Activated B cell treated with CpG ODN at 0.5 μM for 24 hours (primary cell): ENCODE measurements at regions of chrX and their contacts with region 1.

Region 1: DNA sequence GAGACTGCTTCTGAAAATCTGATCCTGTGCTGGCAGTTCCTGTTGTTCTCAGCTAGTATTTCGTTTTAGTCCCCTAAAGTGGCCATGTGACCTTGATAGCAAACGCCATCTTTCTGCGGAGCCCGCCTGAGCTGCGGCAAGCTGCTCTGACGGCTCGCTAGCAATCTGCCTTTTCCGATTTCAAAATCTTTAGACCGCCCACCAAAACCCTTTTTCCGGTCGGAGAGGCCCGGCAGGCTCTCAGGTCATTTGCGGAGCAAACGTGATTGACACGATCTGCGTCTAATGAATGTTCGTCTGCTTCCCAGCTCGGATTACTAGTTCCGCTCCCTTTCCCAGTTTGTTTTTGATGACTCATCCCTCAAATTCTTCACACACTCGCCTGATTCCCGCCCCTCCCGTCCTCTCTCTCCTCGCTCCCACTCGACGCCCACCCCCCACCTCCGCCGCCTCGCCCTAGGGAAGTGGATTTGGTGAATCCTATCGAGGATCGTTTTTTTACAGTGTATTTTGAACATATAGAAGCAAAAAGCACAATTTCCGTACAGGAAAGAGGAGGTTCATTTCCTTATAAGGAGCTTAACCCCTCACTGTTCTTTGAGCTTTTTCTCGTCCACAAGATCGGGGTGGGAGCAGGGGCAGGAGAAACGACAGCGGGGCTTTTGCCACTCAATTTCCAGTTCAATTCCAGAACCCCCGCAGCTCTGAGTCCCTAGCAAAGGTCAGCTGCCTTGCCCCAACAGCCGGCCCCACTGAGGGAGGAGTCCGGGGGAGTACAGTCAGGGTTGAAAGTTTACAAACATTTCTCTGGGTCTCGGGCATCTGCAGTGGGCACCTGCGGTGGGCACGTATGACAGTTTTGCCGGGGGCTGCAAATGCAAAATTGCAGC is 37.5 kb downstream of the NLGN3 start:
- DNase-seq: peak; percentile 44
- ATAC-seq: peak; percentile 90
- H3K4me3 Mint-ChIP-seq: peak overlapping the region; percentile 93
- H3K27ac Mint-ChIP-seq: peak overlapping the region; percentile 99
- H3K4me1 Mint-ChIP-seq: peaks cover 16% of the 10 kb centered on the region
- H3K27me3 Mint-ChIP-seq: no peaks in the 10 kb centered on the region
- CTCF ChIP-seq: no peak

Region 2: DNA sequence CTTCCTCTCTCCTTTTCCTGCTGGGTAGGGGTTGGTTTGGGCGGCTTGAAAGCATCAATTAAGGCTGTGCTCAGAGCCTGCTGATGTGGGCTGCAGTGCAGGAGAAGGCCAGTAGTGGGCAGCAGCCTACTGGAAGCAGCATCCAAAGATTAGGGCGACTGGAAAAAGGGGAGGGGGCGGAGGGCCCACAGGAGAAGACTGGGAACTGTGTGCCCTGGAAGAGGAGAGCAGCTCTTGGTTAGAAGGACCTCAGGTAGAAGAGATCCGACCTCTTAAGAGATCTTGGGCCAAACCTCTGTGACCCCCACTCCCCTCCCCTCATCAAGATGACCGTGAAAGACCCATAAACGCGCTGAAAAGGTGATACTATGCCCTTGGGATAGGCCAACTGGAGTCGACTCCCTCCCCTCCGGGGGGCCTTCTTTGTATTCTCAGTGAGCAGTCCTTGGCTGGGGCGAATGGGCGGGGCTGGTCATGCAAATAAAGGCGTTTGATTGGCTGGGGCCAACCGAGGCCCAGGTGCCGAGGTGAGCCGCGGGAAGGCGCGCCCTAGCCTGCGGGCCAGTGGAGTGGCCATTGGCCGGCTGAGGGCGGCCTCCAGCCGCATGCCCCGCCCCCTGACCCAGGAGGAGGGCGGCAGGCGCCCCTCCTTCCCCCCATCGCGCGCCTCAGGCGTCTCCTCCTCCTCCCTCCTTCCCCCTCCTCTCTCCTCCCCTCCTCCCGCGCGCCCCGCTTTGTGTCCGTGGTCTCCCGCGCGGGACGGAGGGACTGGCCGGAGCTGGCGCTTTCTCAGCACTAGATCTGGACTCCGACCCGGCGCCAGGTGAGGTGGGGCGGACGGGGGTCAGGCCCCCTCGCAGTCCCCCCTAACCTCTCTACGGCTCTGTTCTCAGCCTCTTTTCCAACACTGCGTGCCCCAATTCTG is 727.5 kb before region 1 on chrX:
- CTCF ChIA-PET with region 1: no interaction called
- POLR2A ChIA-PET with region 1: no interaction called
- intact Hi-C with region 1: loop called (anchors 5 kb)
- DNase-seq: peak; percentile 39
- ATAC-seq: peak; percentile 55
- H3K4me3 Mint-ChIP-seq: peak overlapping the region; percentile 78
- H3K27ac Mint-ChIP-seq: peak overlapping the region; percentile 46
- H3K4me1 Mint-ChIP-seq: peaks cover 43% of the 10 kb centered on the region
- H3K27me3 Mint-ChIP-seq: no peaks in the 10 kb centered on the region
- CTCF ChIP-seq: no peak

Region 3: DNA sequence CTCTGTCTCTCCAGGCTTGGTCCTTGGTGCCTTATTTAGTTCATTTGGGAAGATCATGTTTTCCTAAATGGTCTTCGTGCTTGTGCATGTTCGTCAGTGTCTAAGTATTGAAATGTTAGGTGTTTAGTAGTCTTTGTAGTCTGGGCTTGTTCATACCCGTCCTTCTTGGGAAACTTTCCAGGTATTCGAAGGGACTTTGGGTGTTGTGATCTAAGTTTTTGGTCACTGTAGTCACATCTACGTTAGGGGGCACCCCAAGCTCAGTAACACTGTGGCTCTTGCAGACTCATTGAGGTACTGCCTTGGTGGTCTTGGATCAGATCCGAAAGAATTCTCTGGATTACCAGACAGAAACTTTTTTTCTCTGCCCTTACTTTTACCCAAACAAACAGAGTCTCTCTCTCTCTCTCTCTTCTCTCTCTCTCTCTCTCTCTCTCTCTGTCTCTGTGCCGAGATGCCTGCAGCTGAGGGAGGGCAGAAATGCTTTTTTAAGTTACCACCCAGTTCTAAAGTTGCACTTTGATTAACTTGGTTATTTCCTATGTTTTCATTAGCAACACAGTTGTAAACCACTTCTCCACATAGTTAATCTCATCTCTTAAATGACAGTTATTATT is 183.6 kb before region 1 on chrX:
- CTCF ChIA-PET with region 1: interaction called, 6 read pairs
- POLR2A ChIA-PET with region 1: no interaction called
- intact Hi-C with region 1: loop called (anchors 1 kb)
- DNase-seq: no peak
- ATAC-seq: no peak
- H3K4me3 Mint-ChIP-seq: no peak overlapping the region
- H3K27ac Mint-ChIP-seq: no peak overlapping the region
- H3K4me1 Mint-ChIP-seq: no peaks in the 10 kb centered on the region
- H3K27me3 Mint-ChIP-seq: no peaks in the 10 kb centered on the region
- CTCF ChIP-seq: no peak

Region 4: DNA sequence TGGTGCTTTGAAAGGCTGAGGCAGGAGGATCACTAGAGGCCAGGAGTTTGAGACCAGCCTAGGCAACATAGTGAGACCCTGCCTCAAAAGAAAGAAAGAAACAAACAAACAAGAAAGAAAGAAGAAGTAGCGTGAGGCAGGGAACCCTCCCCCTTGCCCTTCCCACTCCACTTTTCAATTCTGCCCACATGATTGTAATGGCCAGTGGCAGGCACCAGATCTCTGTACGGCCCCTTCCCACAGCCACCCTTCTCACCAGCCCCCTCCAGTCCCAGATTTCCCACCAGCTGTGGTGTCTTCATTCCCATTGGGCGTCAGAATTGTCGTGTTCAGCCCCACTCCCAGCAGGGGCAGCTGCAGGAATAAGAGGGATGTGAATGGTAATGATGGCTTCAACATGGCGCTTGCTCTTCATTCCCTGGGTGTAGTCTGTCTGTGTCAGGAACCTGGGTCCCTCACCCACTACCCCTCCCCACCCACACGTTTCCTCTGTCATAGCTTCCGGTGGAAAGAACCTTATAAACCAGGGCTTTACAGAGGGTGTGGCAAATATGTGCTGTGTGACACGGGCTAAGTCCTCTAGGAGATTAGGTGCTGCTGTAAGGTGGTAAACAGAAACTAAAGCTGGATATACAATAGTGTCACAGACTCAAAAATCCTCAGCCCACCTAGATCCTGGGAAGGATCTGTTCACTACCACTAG is 70.9 kb before region 1 on chrX and contains the start of gene IL2RG:
- CTCF ChIA-PET with region 1: no interaction called
- POLR2A ChIA-PET with region 1: interaction called, 28 read pairs
- intact Hi-C with region 1: loop called (anchors 5 kb)
- DNase-seq: peak; percentile 37
- ATAC-seq: peak; percentile 90
- H3K4me3 Mint-ChIP-seq: peak within 1 kb of the TSS; percentile 95
- H3K27ac Mint-ChIP-seq: peak within 1 kb of the TSS; percentile 99
- H3K4me1 Mint-ChIP-seq: peaks cover 67% of the 10 kb centered on the region
- H3K27me3 Mint-ChIP-seq: no peaks in the 10 kb centered on the region
- CTCF ChIP-seq: no peak
- total RNA-seq, gene IL2RG: 261 and 264 TPM in 2 replicates

Region 5: GRCh38 chrX:71198066-71198465 is 15.9 kb after region 1 on chrX:
- CTCF ChIA-PET with region 1: interaction called, 9 read pairs
- POLR2A ChIA-PET with region 1: interaction called, 87 read pairs
- intact Hi-C with region 1: loop called (anchors 1 kb)
- DNase-seq: peak; percentile 13
- ATAC-seq: peak; percentile 84
- H3K4me3 Mint-ChIP-seq: peak overlapping the region; percentile 95
- H3K27ac Mint-ChIP-seq: peak overlapping the region; percentile 95
- H3K4me1 Mint-ChIP-seq: peaks cover 32% of the 10 kb centered on the region
- H3K27me3 Mint-ChIP-seq: no peaks in the 10 kb centered on the region
- CTCF ChIP-seq: no peak

Region 6: DNA sequence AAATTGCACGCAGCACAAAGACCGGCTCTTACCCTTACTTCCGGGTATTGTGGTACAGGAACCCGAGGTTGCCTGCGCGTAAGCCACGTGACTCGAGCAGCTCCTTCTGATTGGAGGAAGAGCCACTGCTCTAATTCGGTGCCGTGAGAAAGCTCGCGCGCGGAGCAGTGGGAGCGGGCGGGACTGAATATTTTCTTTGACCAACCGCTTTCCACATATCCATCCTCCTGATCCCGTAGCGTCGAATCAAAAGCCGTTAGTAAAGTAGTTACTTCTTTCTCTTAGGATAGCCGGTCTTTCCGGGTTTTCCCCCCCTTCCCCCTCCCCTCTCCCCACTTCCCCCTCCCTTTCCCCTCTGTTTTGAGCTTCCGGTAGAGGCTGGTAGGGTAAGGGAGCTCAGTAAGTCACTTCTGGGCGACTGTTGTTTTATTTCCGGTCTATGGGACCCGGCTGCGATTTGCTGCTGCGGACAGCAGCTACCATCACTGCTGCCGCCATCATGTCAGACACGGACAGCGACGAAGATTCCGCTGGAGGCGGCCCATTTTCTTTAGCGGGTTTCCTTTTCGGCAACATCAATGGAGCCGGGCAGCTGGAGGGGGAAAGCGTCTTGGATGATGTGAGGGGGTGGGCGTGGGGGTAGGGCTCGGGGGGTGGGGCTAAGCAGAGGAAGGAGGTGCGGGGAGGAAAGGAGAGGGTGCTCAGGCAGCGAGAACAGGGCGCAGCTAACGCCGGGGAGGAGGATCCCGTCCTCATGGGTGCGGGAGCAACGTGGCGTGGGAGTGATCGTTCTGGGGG is 183.9 kb after region 1 on chrX and contains the start of gene TAF1:
- CTCF ChIA-PET with region 1: no interaction called
- POLR2A ChIA-PET with region 1: interaction called, 46 read pairs
- intact Hi-C with region 1: loop called (anchors 1 kb)
- DNase-seq: peak; percentile 69
- ATAC-seq: peak; percentile 87
- H3K4me3 Mint-ChIP-seq: peak within 1 kb of the TSS; percentile 99
- H3K27ac Mint-ChIP-seq: peak within 1 kb of the TSS; percentile 99
- H3K4me1 Mint-ChIP-seq: peaks cover 21% of the 10 kb centered on the region
- H3K27me3 Mint-ChIP-seq: no peaks in the 10 kb centered on the region
- CTCF ChIP-seq: no peak
- total RNA-seq, gene TAF1: 64.0 and 70.0 TPM in 2 replicates